CD8-positive, alpha-beta memory T cell (primary cell): ENCODE measurements at regions of chr3 and their contacts with region 1.

Region 1: GRCh38 chr3:156554842-156555687 is at the start of gene SSR3:
- DNase-seq: peak; percentile 98 to 99 (median 99)
- H3K4me3 ChIP-seq: peak within 1 kb of the TSS; percentile 92
- H3K4me3 Mint-ChIP-seq: peak within 1 kb of the TSS; percentile 96 to 99 (median 97)
- H3K27ac ChIP-seq: peak within 1 kb of the TSS; percentile 91
- H3K27ac Mint-ChIP-seq: peak within 1 kb of the TSS; percentile 85 to 98 (median 96)
- H3K4me1 ChIP-seq: peaks cover 29% of the 10 kb centered on the region
- H3K4me1 Mint-ChIP-seq: peaks cover 46 to 56% (median 55%) of the 10 kb centered on the region in 3 donors
- H3K27me3 ChIP-seq: no peaks in the 10 kb centered on the region
- H3K27me3 Mint-ChIP-seq: no peaks in the 10 kb centered on the region
- total RNA-seq, gene SSR3: 171 to 175 TPM

Region 2: DNA sequence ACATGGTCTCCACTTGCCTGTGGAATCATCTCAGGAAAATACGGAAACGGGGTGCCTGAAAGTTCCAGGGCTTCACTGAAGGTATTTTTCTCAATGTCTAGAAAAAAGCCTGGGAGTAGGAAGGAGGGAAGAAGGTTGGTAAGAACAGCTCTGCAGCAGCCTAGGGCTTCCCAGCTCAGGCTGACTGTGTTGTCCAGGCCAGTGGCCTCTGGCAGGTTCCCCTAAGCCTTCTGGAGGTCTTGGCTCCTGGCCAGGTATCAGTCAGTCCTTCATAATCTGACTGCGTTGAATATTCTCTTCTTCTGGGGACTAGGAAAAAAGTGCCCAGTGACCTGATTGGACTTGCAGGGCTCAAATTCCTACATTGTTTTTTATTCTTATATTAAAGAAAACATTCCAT is 38.8 kb before region 1 on chr3:
- CTCF ChIA-PET with region 1: no interaction called
- POLR2A ChIA-PET with region 1: no interaction called
- DNase-seq: no peak
- H3K4me3 ChIP-seq: no peak overlapping the region
- H3K4me3 Mint-ChIP-seq: no peak overlapping the region
- H3K27ac ChIP-seq: no peak overlapping the region
- H3K27ac Mint-ChIP-seq: no peak overlapping the region
- H3K4me1 ChIP-seq: no peaks in the 10 kb centered on the region
- H3K4me1 Mint-ChIP-seq: no peaks in the 10 kb centered on the region
- H3K27me3 ChIP-seq: no peaks in the 10 kb centered on the region
- H3K27me3 Mint-ChIP-seq: peaks cover 0 to 8% of the 10 kb centered on the region in 2 donors

Region 3: DNA sequence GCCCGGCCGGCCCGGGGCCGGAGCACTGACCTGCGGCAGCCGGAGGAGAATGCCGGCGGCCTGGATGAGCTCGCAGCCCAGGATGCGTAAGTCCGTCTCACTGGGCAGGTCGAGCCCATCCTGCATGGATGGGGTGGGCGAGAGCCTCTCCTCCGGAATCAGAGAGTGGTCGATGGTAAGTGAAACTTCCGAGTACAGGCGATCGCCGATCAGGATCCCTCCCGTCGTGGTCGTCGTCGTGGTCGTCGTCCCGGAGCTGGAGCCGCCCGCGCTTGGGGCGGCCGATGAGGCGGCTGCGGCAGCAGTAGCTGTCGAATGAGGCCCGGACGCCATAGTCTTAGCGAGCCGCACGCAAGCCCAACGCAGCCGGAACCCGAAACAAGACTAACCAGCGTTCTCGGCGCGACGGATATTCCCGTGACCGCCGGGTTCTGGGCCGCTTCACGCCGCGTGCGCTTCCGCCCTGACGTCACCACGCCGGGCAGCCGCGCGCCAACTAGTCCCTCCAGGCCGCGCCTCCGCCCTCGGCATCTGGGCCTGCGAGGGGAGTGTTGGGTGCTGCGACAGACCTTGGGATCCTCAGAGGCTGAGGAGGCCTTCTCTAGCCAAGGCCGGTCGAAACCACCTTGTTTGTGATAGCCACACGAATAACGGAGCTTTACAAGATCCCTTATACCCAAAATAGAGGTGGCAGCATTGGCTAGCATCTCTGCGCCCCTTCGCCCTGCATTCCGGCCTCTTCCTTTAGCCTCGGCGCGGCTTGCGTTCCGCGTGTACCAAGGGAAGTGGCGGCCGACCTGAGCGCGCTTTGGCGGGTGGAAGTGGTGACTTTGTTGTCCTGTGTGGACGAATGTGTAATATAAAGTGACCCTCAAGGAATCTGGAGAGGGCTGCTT is 604.9 kb after region 1 on chr3 and contains the start of gene CCNL1:
- CTCF ChIA-PET with region 1: no interaction called
- POLR2A ChIA-PET with region 1: interaction called, 18 read pairs
- DNase-seq: peak; percentile 92 to 97 (median 96)
- H3K4me3 ChIP-seq: peak within 1 kb of the TSS; percentile 96
- H3K4me3 Mint-ChIP-seq: peak within 1 kb of the TSS; percentile 90 to 99 (median 93)
- H3K27ac ChIP-seq: peak within 1 kb of the TSS; percentile 100
- H3K27ac Mint-ChIP-seq: peak within 1 kb of the TSS; percentile 96 to 100 (median 100)
- H3K4me1 ChIP-seq: peaks cover 46% of the 10 kb centered on the region
- H3K4me1 Mint-ChIP-seq: peaks cover 53 to 63% (median 54%) of the 10 kb centered on the region in 3 donors
- H3K27me3 ChIP-seq: no peaks in the 10 kb centered on the region
- H3K27me3 Mint-ChIP-seq: peaks cover 0 to 5% of the 10 kb centered on the region in 2 donors
- total RNA-seq, gene CCNL1: 125 to 126 TPM

Region 4: GRCh38 chr3:157174649-157175498 is 619.8 kb after region 1 on chr3:
- CTCF ChIA-PET with region 1: interaction called, 9 read pairs
- POLR2A ChIA-PET with region 1: interaction called, 19 read pairs
- DNase-seq: peak; percentile 97 to 99 (median 98)
- H3K4me3 ChIP-seq: peak overlapping the region; percentile 87
- H3K4me3 Mint-ChIP-seq: peak overlapping the region; percentile 91 to 96 (median 95)
- H3K27ac ChIP-seq: peak overlapping the region; percentile 98
- H3K27ac Mint-ChIP-seq: peak overlapping the region; percentile 96 to 100 (median 98)
- H3K4me1 ChIP-seq: peaks cover 25% of the 10 kb centered on the region
- H3K4me1 Mint-ChIP-seq: peaks cover 30 to 44% (median 39%) of the 10 kb centered on the region in 3 donors
- H3K27me3 ChIP-seq: no peaks in the 10 kb centered on the region
- H3K27me3 Mint-ChIP-seq: peaks cover 3 to 5% of the 10 kb centered on the region in 2 donors